Sigmoid colon (tissue), 7 donors: ENCODE measurements at regions of chr4 and their contacts with region 1.

Region 1: DNA sequence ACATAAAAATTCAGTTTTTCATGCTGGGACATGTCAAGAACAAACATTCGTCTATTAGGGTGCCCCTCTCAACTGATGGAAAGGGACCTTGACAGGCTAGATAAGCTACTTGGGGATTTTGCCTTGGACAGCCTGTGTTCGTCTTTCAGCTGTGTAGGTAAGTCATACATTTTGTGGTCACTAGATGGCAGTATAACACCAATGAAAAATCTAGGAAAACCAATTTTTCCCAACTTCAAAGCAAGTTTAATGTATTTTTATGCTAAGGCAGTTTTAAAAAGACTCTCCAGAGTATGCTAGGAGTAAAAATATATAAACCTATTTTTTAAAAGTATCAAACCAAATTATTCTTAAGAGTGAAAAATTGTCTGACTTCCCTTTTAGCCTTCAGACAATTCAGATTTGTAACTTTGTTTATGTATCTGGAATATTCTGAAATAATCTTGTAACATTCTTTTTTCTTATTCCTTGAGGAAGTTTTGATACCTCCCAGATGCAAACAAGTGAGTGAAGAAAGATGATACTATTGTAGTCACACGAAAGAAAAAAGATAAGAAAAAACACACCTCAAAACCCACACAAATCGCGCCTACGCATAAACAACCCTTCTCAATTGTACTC is 158.3 kb downstream of the CPE start:
- DNase-seq: no peak
- H3K4me3 ChIP-seq: no peak overlapping the region
- H3K27ac ChIP-seq: no peak overlapping the region
- H3K4me1 ChIP-seq: no peaks in the 10 kb centered on the region
- H3K27me3 ChIP-seq: no peaks in the 10 kb centered on the region
- CTCF ChIP-seq: peak; percentile 50 to 74 (median 58)
- EP300 ChIP-seq: no peak
- POLR2A ChIP-seq: no peak

Region 2: GRCh38 chr4:164997941-164998340 is 539.2 kb before region 1 on chr4:
- intact Hi-C with region 1: no loop called
- DNase-seq: no peak
- H3K4me3 ChIP-seq: no peak overlapping the region
- H3K27ac ChIP-seq: no peak overlapping the region
- H3K4me1 ChIP-seq: no peaks in the 10 kb centered on the region
- H3K27me3 ChIP-seq: peaks cover 0 to 4% (median 0%) of the 10 kb centered on the region in 3 donors
- CTCF ChIP-seq: no peak
- EP300 ChIP-seq: no peak
- POLR2A ChIP-seq: no peak

Region 3: DNA sequence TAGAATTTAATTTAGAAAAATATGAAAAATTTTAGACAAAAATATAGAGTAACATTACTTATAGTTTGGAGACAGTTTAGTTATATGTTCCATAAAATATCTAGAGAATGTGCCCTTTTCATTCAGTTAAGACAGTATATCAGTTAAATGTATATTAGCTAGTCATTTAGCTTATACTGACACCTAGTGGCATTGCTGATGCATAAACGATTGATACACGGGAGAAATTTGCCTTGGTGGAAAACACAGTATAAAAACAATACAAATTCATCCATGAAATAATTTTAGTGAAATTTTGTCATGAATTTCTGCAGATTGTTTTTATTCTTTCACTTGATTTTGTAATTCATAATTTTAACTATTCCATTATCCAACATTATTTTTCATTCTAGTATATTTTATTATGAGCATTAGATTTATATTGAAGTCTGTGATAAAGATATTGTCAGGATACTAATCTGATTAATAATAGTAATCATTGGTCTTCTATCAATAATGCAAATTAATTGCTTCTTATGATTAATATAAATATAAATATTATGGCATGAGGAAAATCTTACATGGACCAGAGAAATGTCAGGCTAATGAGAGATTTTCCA is 554.9 kb after region 1 on chr4:
- intact Hi-C with region 1: loop called (anchors 1 kb)
- DNase-seq: no peak
- H3K4me3 ChIP-seq: no peak overlapping the region
- H3K27ac ChIP-seq: no peak overlapping the region
- H3K4me1 ChIP-seq: no peaks in the 10 kb centered on the region
- H3K27me3 ChIP-seq: no peaks in the 10 kb centered on the region
- CTCF ChIP-seq: peak; percentile 56 to 66 (median 60)
- EP300 ChIP-seq: no peak
- POLR2A ChIP-seq: no peak